ENCODE measurements at regions of chr22 and their contacts with region 1.

Region 1: GRCh38 chr22:25669253-25670069 is 72.5 kb upstream of the MYO18B start:
- DNase-seq: no peak
- ATAC-seq: no peak
- H3K4me3 Mint-ChIP-seq: no peak overlapping the region
- H3K27ac Mint-ChIP-seq: no peak overlapping the region
- H3K4me1 Mint-ChIP-seq: peaks cover 13% of the 10 kb centered on the region
- H3K27me3 Mint-ChIP-seq: no peaks in the 10 kb centered on the region

Region 2: GRCh38 chr22:25623310-25623734 is 46.1 kb before region 1 on chr22:
- CTCF ChIA-PET with region 1: no interaction called
- POLR2A ChIA-PET with region 1: no interaction called
- intact Hi-C with region 1: loop called in 1 of 2 experiments (anchors 5 kb)
- DNase-seq: peak; percentile 41
- ATAC-seq: peak; percentile 93
- H3K4me3 Mint-ChIP-seq: no peak overlapping the region
- H3K27ac Mint-ChIP-seq: no peak overlapping the region
- H3K4me1 Mint-ChIP-seq: peaks cover 23% of the 10 kb centered on the region
- H3K27me3 Mint-ChIP-seq: peaks cover 2% of the 10 kb centered on the region

Region 3: DNA sequence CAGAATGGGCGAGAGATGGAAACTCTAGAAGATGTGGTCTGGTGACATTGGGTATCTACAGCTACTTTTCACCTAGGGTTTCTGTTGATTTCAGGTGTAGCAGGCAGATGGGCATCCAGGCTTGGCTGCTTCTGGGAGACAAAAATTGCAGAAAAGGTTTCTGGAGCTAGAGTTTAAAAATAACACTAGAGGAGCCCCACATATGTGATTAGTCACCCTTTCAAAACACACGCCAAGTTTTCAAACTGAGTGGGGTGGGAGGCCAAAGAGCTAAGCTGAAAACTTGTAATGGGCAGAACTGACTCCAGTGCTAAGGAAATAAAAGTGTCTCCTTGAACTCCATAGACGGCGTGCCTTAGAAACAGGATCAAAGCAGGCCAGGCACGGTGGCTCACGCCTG is 24.2 kb before region 1 on chr22:
- CTCF ChIA-PET with region 1: no interaction called
- POLR2A ChIA-PET with region 1: no interaction called
- intact Hi-C with region 1: loop called in 1 of 2 experiments (anchors 2 kb)
- DNase-seq: no peak
- ATAC-seq: no peak
- H3K4me3 Mint-ChIP-seq: no peak overlapping the region
- H3K27ac Mint-ChIP-seq: no peak overlapping the region
- H3K4me1 Mint-ChIP-seq: peaks cover 9% of the 10 kb centered on the region
- H3K27me3 Mint-ChIP-seq: no peaks in the 10 kb centered on the region

Measured in activated CD4-positive, alpha-beta T cell treated with anti-CD3 and anti-CD28 coated beads for 36 hours (primary cell).